ENCODE measurements at regions of chr12 and their contacts with region 1.

Region 1: GRCh38 chr12:32755654-32756475 is at the start of gene YARS2:
- DNase-seq: peak; percentile 87
- H3K4me3 Mint-ChIP-seq: peak within 1 kb of the TSS; percentile 88
- H3K27ac Mint-ChIP-seq: peak within 1 kb of the TSS; percentile 81
- H3K4me1 Mint-ChIP-seq: peaks cover 33% of the 10 kb centered on the region
- H3K27me3 Mint-ChIP-seq: no peaks in the 10 kb centered on the region
- total RNA-seq, gene YARS2: 28.2 and 31.1 TPM in 2 replicates

Region 2: GRCh38 chr12:31659087-31659933 is 1096.6 kb before region 1 on chr12 and contains the start of gene ETFBKMT:
- intact Hi-C with region 1: loop called (anchors 1 kb)
- DNase-seq: peak; percentile 95
- H3K4me3 Mint-ChIP-seq: peak within 1 kb of the TSS; percentile 94
- H3K27ac Mint-ChIP-seq: peak within 1 kb of the TSS; percentile 97
- H3K4me1 Mint-ChIP-seq: peaks cover 11% of the 10 kb centered on the region
- H3K27me3 Mint-ChIP-seq: no peaks in the 10 kb centered on the region
- total RNA-seq, gene ETFBKMT: 0.62 and 0.69 TPM in 2 replicates

Region 3: DNA sequence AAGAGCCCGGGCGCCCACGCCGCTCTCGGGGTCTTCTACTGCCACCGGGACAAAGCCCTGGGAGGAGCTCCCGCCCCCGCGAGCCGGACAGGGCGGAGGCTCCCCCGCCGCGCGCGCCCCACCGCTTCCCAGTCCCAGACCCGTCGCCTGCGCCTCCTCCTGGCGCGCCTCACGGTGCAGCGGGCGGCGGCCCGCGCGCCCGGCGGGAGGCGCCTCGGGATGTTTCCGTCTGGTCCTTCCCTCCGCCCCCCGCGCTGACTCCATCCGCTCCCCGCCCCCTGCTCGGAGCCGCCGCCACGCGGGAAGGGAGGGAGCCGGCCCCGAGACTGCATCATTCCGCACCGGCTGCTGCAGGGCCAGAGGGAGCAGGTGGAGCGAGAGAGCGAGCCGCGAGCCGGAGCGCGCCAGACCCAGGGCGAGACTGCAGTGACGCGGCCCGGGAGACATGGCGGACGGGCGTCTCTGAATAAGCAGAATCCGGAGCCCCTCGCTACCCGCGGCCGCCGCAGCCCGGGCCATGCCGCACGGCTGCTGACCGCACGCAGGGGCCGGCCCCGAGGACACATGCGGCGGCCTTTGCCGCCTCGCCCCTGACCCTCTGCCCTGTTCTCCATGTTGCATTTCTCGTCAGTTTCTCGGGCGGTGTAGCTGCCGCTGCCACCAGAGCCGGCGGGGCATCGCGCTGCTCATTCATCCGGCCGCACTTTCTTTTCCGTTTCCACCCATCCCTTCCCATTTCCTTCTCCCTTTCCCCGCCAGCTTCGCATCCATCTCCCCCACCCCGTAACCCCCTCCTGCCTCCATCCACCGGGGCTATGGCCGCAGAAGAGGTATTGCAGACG is 649.1 kb before region 1 on chr12 and contains the start of gene BICD1:
- intact Hi-C with region 1: loop called (anchors 2 kb)
- DNase-seq: peak; percentile 76
- H3K4me3 Mint-ChIP-seq: peak within 1 kb of the TSS; percentile 98
- H3K27ac Mint-ChIP-seq: peak within 1 kb of the TSS; percentile 87
- H3K4me1 Mint-ChIP-seq: peaks cover 36% of the 10 kb centered on the region
- H3K27me3 Mint-ChIP-seq: peaks cover 19% of the 10 kb centered on the region
- total RNA-seq, gene BICD1: 20.9 and 22.2 TPM in 2 replicates

Region 4: GRCh38 chr12:32419520-32419960 is 336.3 kb before region 1 on chr12:
- intact Hi-C with region 1: no loop called
- DNase-seq: no peak
- H3K4me3 Mint-ChIP-seq: no peak overlapping the region
- H3K27ac Mint-ChIP-seq: no peak overlapping the region
- H3K4me1 Mint-ChIP-seq: no peaks in the 10 kb centered on the region
- H3K27me3 Mint-ChIP-seq: no peaks in the 10 kb centered on the region

Region 5: GRCh38 chr12:32455607-32456071 is 300.2 kb before region 1 on chr12:
- intact Hi-C with region 1: loop called (anchors 1 kb)
- DNase-seq: no peak
- H3K4me3 Mint-ChIP-seq: no peak overlapping the region
- H3K27ac Mint-ChIP-seq: no peak overlapping the region
- H3K4me1 Mint-ChIP-seq: peaks cover 5% of the 10 kb centered on the region
- H3K27me3 Mint-ChIP-seq: peaks cover 11% of the 10 kb centered on the region

Region 6: DNA sequence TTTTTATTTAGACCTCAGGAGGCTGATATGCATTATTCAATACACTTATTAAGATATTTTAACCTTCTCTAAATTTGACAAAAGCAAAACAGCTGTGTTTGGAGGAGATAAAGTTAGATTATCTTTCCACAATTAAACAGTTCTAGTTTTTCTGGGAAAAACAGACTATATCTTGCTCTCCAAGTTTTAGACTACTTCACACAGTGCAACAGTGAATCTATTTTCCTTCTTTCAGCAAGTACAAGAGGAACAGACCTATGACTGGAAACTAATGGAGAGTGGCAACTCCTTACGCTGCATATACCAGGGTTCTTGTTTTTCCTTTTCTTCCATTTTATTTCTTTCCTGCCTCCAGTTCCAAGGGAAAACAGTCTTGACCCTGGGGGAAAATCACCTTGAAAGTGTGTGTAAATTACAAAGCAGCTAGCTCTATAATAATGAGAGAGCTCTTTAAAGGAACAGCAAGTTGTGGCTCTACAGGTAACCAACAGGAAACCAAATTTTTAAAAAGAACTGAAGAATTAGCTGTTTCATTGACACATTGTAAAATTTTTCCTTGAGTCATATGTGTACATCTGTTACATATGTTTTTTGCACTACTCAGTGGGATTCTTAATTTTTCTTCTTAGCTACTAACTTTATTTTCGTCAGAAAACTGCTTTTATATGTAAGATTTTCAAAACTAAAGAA is 49.4 kb before region 1 on chr12:
- intact Hi-C with region 1: loop called (anchors 2 kb)
- DNase-seq: no peak
- H3K4me3 Mint-ChIP-seq: peak overlapping the region; percentile 45
- H3K27ac Mint-ChIP-seq: peak overlapping the region; percentile 64
- H3K4me1 Mint-ChIP-seq: peaks cover 26% of the 10 kb centered on the region
- H3K27me3 Mint-ChIP-seq: no peaks in the 10 kb centered on the region

Region 7: GRCh38 chr12:33000016-33000415 is 244.2 kb after region 1 on chr12:
- intact Hi-C with region 1: no loop called
- DNase-seq: no peak
- H3K4me3 Mint-ChIP-seq: no peak overlapping the region
- H3K27ac Mint-ChIP-seq: no peak overlapping the region
- H3K4me1 Mint-ChIP-seq: no peaks in the 10 kb centered on the region
- H3K27me3 Mint-ChIP-seq: peaks cover 2% of the 10 kb centered on the region

Region 8: GRCh38 chr12:33605751-33606150 is 849.9 kb after region 1 on chr12:
- intact Hi-C with region 1: loop called (anchors 5 kb)
- DNase-seq: no peak
- H3K4me3 Mint-ChIP-seq: no peak overlapping the region
- H3K27ac Mint-ChIP-seq: no peak overlapping the region
- H3K4me1 Mint-ChIP-seq: no peaks in the 10 kb centered on the region
- H3K27me3 Mint-ChIP-seq: no peaks in the 10 kb centered on the region

Region 9: GRCh38 chr12:34218165-34219045 is 1462.5 kb after region 1 on chr12:
- intact Hi-C with region 1: loop called (anchors 1 kb)
- DNase-seq: peak; percentile 45
- H3K4me3 Mint-ChIP-seq: peak overlapping the region; percentile 87
- H3K27ac Mint-ChIP-seq: peak overlapping the region; percentile 35
- H3K4me1 Mint-ChIP-seq: peaks cover 7% of the 10 kb centered on the region
- H3K27me3 Mint-ChIP-seq: peaks cover 4% of the 10 kb centered on the region

Measured in activated T-helper 1 cell treated with anti-CD3 and anti-CD28 coated beads, Interleukin-12 subunit alpha, Interleukin-12 subunit beta, Interleukin-2, Interleukin-4 antibody, amounts not matched to agents 30 ng/mL and 10 ng/mL and 1 ng/mL, durations not matched to agents 14 hours and 24 hours and 36 hours (primary cell).